WTC11 (cell line): ENCODE measurements at regions of chr3 and their contacts with region 1.

Region 1: DNA sequence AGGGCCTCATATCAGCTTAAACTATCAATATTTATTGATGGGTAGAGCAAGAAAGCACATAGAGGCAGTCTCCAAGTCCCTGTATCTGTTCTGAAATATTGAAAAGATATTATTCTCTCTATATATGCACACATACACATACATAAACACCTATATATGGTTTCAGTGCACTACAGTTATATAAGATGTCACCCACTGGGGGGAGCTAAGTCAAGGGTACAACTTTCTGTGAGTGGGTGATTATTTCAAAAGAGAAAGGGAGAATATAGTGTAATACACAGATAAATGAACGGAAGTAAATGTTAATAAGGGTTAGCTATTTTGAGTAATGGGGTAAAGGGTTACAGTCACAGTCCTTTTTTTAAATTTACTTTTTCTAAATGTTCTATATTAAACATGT is 8.8 kb downstream of the SNTN start:
- DNase-seq: no peak
- ATAC-seq: no peak
- H3K4me3 Mint-ChIP-seq: no peak overlapping the region
- H3K27ac Mint-ChIP-seq: no peak overlapping the region
- H3K4me1 Mint-ChIP-seq: peaks cover 9% of the 10 kb centered on the region
- H3K27me3 Mint-ChIP-seq: no peaks in the 10 kb centered on the region
- CTCF ChIP-seq: no peak

Region 2: GRCh38 chr3:63364910-63365431 is 296.3 kb before region 1 on chr3:
- CTCF ChIA-PET with region 1: interaction called, 16 read pairs
- POLR2A ChIA-PET with region 1: no interaction called
- DNase-seq: peak; percentile 30
- ATAC-seq: peak; percentile 84
- H3K4me3 Mint-ChIP-seq: no peak overlapping the region
- H3K27ac Mint-ChIP-seq: no peak overlapping the region
- H3K4me1 Mint-ChIP-seq: peaks cover 5% of the 10 kb centered on the region; the same call in 1 of the 2 replicates
- H3K27me3 Mint-ChIP-seq: no peaks in the 10 kb centered on the region
- CTCF ChIP-seq: peak; percentile 52; the same call in 1 of the 2 replicates

Region 3: DNA sequence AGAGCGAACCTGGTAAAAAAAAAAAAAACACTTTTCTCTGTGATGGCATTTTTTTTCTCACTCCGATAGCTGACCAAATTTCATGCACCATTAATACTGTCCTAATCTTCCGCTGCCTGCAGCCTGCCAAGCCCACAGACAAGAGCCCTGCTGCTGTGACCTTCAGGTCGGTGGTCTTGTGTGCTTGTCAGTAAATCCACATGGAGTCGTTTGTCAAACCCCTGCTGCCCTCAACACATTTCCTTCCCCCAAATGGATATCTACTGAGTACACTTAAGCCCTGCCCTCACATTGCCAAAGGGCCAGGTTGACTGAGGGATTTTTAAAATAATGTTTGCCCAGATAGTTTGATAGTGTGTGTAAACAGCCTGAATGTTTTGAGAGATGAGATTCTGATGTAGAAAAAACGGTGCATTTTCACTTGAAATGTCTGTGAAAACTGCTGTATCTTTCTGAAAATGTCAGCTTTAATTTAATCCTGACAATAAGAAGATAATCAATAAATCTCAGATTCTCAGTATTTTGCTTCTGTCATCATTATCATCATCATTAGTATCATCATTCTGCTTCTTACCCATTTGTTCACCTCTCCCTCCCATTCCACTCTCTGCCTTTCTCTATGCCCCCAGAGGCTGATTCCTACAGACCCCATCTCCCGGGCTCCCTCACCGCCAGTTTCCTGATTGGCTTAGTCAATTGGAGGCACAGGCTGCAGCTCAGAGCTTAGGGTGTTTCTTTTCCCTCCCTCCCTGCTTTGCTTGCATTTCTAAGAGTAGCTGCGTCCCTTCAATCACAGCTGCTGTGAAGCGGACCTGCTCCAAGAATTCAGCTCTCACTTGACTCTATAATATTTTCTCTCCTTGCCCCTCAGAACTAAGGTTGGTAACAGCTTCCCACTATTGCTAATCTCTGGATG is 17.1 kb before region 1 on chr3:
- CTCF ChIA-PET with region 1: interaction called, 11 read pairs
- POLR2A ChIA-PET with region 1: no interaction called
- DNase-seq: peak; percentile 38
- ATAC-seq: peak; percentile 96
- H3K4me3 Mint-ChIP-seq: peak overlapping the region; percentile 88
- H3K27ac Mint-ChIP-seq: peak overlapping the region; percentile 15
- H3K4me1 Mint-ChIP-seq: peaks cover 17% of the 10 kb centered on the region
- H3K27me3 Mint-ChIP-seq: peaks cover 22% of the 10 kb centered on the region
- CTCF ChIP-seq: no peak